ENCODE measurements at regions of chr20 and their contacts with region 1.

Region 1: GRCh38 chr20:49286689-49287551 is 9.1 kb upstream of the ZNFX1 start:
- DNase-seq: no peak
- H3K4me3 ChIP-seq: peak overlapping the region in 2 of 4 experiments; percentile 10 to 89; a peak in 4 of 8 replicates
- H3K27ac ChIP-seq: peak overlapping the region; percentile 34; the same call in 1 of the 2 replicates
- H3K4me1 ChIP-seq: peaks cover 2 to 15% (median 11%) of the 10 kb centered on the region in 4 experiments; a peak in 6 of 7 replicates
- H3K27me3 ChIP-seq: no peaks in the 10 kb centered on the region
- CTCF ChIP-seq: no peak
- EP300 ChIP-seq: no peak
- POLR2A ChIP-seq: peak in 1 of 2 experiments; percentile 36; a peak in 1 of 3 replicates
- RAD21 ChIP-seq: no peak

Region 2: GRCh38 chr20:49268600-49269365 is 18.1 kb before region 1 on chr20:
- CTCF ChIA-PET with region 1: interaction called, 4 read pairs
- POLR2A ChIA-PET with region 1: interaction called, 114 read pairs
- DNase-seq: no peak
- H3K4me3 ChIP-seq: no peak overlapping the region
- H3K27ac ChIP-seq: no peak overlapping the region
- H3K4me1 ChIP-seq: no peaks in the 10 kb centered on the region
- H3K27me3 ChIP-seq: no peaks in the 10 kb centered on the region
- CTCF ChIP-seq: no peak
- EP300 ChIP-seq: no peak
- POLR2A ChIP-seq: no peak
- RAD21 ChIP-seq: no peak